Common myeloid progenitor, CD34-positive (primary cell): ENCODE measurements at regions of chr18 and their contacts with region 1.

Region 1: DNA sequence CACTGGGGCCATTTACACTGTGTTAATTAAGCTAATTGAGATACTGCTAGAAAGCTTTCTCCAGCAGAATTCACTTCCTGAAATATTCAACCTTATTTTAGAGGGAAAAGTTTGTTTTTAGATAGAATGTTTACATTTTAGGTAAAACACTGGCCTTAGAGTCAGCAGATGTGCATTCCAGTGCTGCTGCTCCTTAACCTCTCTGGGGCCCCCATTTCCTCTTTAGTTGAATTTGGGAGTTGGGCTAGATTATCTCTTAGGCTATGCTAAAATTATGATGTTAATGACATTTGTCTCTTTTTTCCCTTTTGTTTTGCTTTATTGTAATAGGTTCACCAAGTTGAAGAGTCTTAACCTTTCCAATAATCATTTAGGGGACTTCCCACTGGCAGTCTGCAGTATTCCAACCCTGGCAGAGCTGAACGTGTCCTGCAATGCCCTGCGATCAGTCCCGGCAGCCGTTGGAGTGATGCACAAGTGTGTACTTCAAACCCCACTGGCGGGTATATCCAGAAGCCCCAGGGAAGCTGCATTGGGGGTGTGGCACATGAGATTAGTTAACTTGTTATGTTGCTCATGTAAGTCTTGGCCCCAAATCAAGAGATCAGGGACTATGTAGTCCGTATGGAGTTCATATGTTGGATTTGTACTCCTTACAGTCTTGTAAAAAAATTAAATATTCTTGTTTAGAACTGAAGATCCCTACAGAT is 179.5 kb downstream of the PHLPP1 start:
- DNase-seq: no peak
- H3K4me3 ChIP-seq: no peak overlapping the region
- H3K27ac ChIP-seq: no peak overlapping the region
- H3K4me1 ChIP-seq: peaks cover 0 to 2% (median 0%) of the 10 kb centered on the region in 4 experiments
- H3K27me3 ChIP-seq: no peaks in the 10 kb centered on the region

Region 2: GRCh38 chr18:62919109-62919838 is 24.4 kb after region 1 on chr18:
- CTCF ChIA-PET with region 1: interaction called, 11 read pairs
- POLR2A ChIA-PET with region 1: no interaction called
- DNase-seq: no peak
- H3K4me3 ChIP-seq: no peak overlapping the region
- H3K27ac ChIP-seq: no peak overlapping the region
- H3K4me1 ChIP-seq: peaks cover 2 to 8% (median 5%) of the 10 kb centered on the region in 4 experiments
- H3K27me3 ChIP-seq: no peaks in the 10 kb centered on the region

Region 3: DNA sequence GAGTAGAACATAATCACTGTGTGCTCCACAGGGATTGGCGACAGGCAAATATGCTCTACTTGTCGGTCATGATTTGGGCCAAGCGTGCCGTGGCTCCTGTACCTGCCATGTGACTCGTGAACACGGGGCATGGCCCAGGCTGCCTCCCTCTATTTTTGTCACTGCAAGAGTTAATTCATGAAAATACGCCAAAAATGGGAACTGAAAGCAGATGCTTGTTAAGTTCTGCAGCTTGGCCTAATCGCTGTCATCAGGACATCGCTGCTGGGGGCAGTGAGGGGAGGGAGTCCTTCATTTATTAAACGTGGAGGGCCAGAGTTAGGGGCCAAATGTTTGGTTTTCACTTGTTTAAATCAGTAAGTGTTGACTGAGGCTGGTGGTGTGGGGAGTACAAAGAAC is 246.9 kb after region 1 on chr18:
- CTCF ChIA-PET with region 1: no interaction called
- POLR2A ChIA-PET with region 1: no interaction called
- DNase-seq: peak; percentile 21 to 74 (median 56)
- H3K4me3 ChIP-seq: peak overlapping the region in 1 of 7 experiments; percentile 6
- H3K27ac ChIP-seq: no peak overlapping the region
- H3K4me1 ChIP-seq: peaks cover 9 to 54% (median 48%) of the 10 kb centered on the region in 4 experiments
- H3K27me3 ChIP-seq: no peaks in the 10 kb centered on the region